ENCODE measurements at regions of chr3 and their contacts with region 1.

Region 1: DNA sequence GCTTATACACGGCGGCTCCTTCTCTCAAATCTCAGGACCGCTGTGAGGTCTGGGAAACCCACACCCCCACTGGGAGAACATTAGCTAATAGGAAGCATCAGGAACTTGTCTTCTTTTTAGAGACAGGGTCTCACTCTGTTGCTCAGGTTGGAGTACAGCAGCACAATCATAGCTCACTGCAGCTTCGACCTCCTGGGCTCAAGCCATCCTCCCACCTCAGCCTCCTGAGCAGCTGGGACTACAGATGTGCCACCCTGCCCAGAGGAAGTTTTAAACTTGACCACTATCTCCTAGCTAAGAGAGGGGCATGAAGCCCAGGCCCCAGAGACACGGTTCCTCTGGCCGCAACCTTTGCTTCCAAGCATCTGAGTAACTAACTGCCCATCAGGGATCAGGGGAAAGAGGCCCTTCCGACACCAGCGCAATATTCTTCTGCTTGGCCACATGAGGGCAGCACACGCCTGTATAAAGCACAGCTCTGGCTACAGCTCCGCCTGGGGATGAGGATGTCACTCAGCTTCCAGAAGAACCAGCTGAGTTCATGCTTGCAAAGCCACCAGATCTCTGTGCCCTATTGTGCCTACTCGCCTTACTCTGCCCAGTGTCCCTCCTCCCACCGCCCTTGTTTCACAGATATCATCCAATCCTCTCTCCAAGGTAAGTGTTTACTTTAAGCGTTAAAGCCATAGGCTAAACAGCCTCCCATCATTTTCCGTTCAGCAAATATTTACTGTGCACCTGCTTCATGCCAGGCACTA is 57.5 kb upstream of the SLC6A11 start:
- DNase-seq: peak; percentile 24
- H3K4me3 ChIP-seq: no peak overlapping the region
- CTCF ChIP-seq: peak; percentile 77

Region 2: GRCh38 chr3:10746001-10746400 is 12.5 kb before region 1 on chr3:
- CTCF ChIA-PET with region 1: interaction called, 20 read pairs
- POLR2A ChIA-PET with region 1: no interaction called
- DNase-seq: no peak
- H3K4me3 ChIP-seq: no peak overlapping the region
- CTCF ChIP-seq: no peak

Region 3: GRCh38 chr3:10772271-10773161 is 14.0 kb after region 1 on chr3:
- CTCF ChIA-PET with region 1: interaction called, 58 read pairs
- POLR2A ChIA-PET with region 1: no interaction called
- DNase-seq: no peak
- H3K4me3 ChIP-seq: no peak overlapping the region
- CTCF ChIP-seq: no peak

Region 4: DNA sequence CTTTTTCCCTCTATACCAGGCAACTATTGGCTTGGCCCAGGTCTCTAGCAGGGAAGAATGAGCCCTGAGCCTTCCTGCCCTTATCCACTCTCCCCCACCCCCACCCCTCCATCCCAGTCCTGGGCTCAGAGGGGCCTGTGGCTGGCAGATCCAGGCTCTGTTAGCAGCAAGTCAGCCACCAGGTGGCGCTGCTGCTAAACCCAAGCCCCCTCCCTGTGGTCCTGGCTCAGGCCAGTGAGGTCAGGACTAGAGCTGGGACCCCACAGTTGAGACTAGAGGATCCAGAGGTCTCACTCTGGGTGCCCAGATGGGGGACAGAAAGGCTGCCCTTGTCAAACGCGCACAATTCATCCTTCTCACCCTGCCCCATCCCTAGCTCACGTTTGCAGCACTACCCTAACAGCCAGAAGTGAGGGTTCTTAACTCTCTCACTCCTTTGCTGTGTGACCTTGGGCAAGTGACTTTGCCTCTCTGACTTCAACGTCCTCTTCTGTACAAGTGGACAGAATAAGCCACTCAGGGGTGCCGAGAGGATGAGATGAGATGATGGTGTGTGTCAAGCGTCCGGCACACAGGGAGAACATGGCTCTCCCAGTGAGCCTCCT is 187.3 kb after region 1 on chr3:
- CTCF ChIA-PET with region 1: interaction called, 13 read pairs
- POLR2A ChIA-PET with region 1: no interaction called
- DNase-seq: no peak
- H3K4me3 ChIP-seq: no peak overlapping the region
- CTCF ChIP-seq: peak; percentile 85

Region 5: GRCh38 chr3:11050666-11051323 is 292.3 kb after region 1 on chr3:
- CTCF ChIA-PET with region 1: interaction called, 22 read pairs
- POLR2A ChIA-PET with region 1: no interaction called
- DNase-seq: no peak
- H3K4me3 ChIP-seq: no peak overlapping the region
- CTCF ChIP-seq: no peak

Measured in AG04449 (cell line).